HepG2 (cell line): ENCODE measurements at regions of chr18 and their contacts with region 1.

Region 1: DNA sequence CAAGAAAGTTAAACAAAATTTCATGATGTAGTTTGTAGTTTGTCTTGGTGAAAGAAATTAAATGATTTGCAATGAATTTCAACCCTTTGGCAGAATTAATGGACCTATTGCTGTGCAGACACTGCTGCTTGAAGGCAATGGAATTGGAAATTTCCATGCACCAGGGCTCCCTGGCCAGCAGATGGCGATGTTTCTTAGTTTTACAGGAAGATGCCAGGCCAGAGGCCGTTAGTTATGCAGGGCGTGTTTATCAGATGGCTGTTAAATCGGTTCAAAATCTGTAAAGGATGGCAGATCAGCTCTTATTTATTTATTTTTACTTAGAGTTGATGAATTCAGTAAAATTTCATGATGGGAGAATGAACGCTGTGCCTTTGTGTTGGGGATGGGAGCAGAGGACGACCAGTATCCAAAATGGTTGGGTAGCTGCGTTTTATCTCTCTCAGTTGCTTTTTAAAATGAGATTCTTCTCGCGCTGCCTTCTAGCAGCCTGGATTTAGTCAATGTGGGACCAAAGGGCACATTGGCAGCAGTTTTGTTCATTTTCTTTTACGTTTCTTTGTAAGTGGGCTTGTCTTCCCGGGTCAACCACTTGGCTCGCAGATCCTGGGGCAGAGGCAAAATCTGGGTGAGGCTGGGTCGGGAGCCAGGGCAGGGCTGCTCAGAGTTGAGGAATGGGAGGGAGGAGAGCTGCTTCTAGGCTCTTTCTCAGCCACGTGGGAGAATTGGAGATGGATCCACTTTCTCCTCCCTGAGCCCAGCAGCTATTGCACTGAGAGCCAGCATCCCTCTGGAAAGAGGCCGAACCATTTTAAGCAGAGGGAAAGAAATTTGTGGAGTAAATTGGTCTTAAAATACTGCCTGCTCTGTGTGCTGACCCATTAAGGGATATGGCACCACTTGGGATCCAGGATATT is 344.0 kb downstream of the PIK3C3 start:
- DNase-seq: peak; percentile 68
- ATAC-seq: peak; percentile 94
- H3K4me3 ChIP-seq: no peak overlapping the region
- H3K27ac ChIP-seq: no peak overlapping the region
- H3K4me1 ChIP-seq: peaks cover 15% of the 10 kb centered on the region
- H3K27me3 ChIP-seq: no peaks in the 10 kb centered on the region
- CTCF ChIP-seq: peak; percentile 88
- EP300 ChIP-seq: peak in 1 of 2 experiments; percentile 60; a peak in 1 of 4 replicates
- POLR2A ChIP-seq: no peak
- RAD21 ChIP-seq: peak; percentile 80

Region 2: GRCh38 chr18:42446195-42446594 is 147.2 kb after region 1 on chr18:
- CTCF ChIA-PET with region 1: no interaction called
- POLR2A ChIA-PET with region 1: no interaction called
- in situ Hi-C with region 1: no loop called
- intact Hi-C with region 1: loop called (anchors 2 kb)
- DNase-seq: peak; percentile 94
- ATAC-seq: peak; percentile 95
- H3K4me3 ChIP-seq: no peak overlapping the region
- H3K27ac ChIP-seq: peak overlapping the region; percentile 55
- H3K4me1 ChIP-seq: peaks cover 40% of the 10 kb centered on the region
- H3K27me3 ChIP-seq: no peaks in the 10 kb centered on the region
- CTCF ChIP-seq: no peak
- EP300 ChIP-seq: peak; percentile 62 to 78; a peak in 3 of 4 replicates
- POLR2A ChIP-seq: no peak
- RAD21 ChIP-seq: no peak

Region 3: GRCh38 chr18:42730272-42730671 is 431.3 kb after region 1 on chr18:
- CTCF ChIA-PET with region 1: no interaction called
- POLR2A ChIA-PET with region 1: no interaction called
- in situ Hi-C with region 1: no loop called
- intact Hi-C with region 1: loop called (anchors 5 kb)
- DNase-seq: no peak
- ATAC-seq: no peak
- H3K4me3 ChIP-seq: no peak overlapping the region
- H3K27ac ChIP-seq: no peak overlapping the region
- H3K4me1 ChIP-seq: no peaks in the 10 kb centered on the region
- H3K27me3 ChIP-seq: no peaks in the 10 kb centered on the region
- CTCF ChIP-seq: no peak
- EP300 ChIP-seq: no peak
- POLR2A ChIP-seq: no peak
- RAD21 ChIP-seq: no peak

Region 4: GRCh38 chr18:43271593-43272432 is 972.8 kb after region 1 on chr18:
- CTCF ChIA-PET with region 1: no interaction called
- POLR2A ChIA-PET with region 1: interaction called, 4 read pairs
- in situ Hi-C with region 1: loop called (anchors 25 kb)
- intact Hi-C with region 1: loop called (anchors 5 kb)
- DNase-seq: peak; percentile 35
- ATAC-seq: no peak
- H3K4me3 ChIP-seq: no peak overlapping the region
- H3K27ac ChIP-seq: no peak overlapping the region
- H3K4me1 ChIP-seq: no peaks in the 10 kb centered on the region
- H3K27me3 ChIP-seq: no peaks in the 10 kb centered on the region
- CTCF ChIP-seq: peak; percentile 60
- EP300 ChIP-seq: no peak
- POLR2A ChIP-seq: no peak
- RAD21 ChIP-seq: no peak; the same call in 1 of the 2 replicates

Region 5: DNA sequence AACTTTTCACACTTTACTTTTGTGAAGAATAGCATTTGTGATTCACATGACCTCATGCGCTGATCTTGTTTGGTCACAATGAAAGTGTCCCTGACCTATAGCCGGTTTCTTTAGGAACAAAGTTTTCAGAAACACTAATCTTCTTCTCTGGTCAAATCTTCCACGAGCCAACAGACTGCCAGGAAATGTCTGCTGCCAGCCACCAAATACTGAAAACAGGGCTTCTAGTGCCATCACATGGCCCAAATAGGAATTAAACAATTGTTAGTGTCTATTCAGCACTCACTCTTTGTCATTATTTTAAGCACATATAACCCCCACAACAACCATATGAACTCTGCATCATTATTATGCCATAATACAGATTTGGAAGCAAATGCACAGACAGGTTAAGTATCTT is 1264.8 kb after region 1 on chr18:
- CTCF ChIA-PET with region 1: no interaction called
- POLR2A ChIA-PET with region 1: no interaction called
- in situ Hi-C with region 1: no loop called
- intact Hi-C with region 1: loop called (anchors 10 kb)
- DNase-seq: peak; percentile 12
- ATAC-seq: peak; percentile 84
- H3K4me3 ChIP-seq: no peak overlapping the region
- H3K27ac ChIP-seq: no peak overlapping the region
- H3K4me1 ChIP-seq: no peaks in the 10 kb centered on the region
- H3K27me3 ChIP-seq: no peaks in the 10 kb centered on the region
- CTCF ChIP-seq: peak; percentile 67
- EP300 ChIP-seq: no peak
- POLR2A ChIP-seq: no peak
- RAD21 ChIP-seq: peak; percentile 20; the same call in 1 of the 2 replicates

Region 6: DNA sequence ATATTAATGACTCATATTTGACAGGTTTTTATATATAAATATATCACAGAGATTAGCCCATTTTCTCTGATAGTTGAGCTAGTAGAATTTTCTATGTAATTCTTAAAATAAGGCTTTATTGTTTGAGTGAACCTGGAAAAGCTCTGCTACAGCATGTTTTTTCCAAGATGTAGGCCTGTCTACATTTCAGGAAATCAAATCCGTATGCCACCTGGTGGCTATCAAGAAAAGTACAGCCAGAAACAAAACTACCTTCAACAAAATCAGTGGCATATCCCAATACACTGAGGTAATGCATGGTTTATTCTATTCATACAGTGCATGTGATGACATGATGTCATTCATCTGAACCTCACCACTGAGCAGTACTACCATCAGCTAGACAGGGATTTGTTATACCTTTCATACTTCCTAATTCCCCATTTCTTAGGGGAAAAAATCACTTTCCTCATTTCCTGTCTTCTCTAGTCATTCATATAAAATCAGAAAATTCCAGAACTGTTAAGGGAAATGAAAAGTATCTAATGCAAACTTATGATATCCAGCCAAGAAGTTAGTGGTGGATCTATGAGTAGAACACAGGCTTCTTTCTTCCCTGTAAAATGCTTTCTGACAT is 1288.6 kb after region 1 on chr18:
- CTCF ChIA-PET with region 1: no interaction called
- POLR2A ChIA-PET with region 1: no interaction called
- in situ Hi-C with region 1: loop called (anchors 25 kb)
- intact Hi-C with region 1: no loop called
- DNase-seq: peak; percentile 25
- ATAC-seq: peak; percentile 67
- H3K4me3 ChIP-seq: no peak overlapping the region
- H3K27ac ChIP-seq: no peak overlapping the region
- H3K4me1 ChIP-seq: no peaks in the 10 kb centered on the region
- H3K27me3 ChIP-seq: no peaks in the 10 kb centered on the region
- CTCF ChIP-seq: peak; percentile 59
- EP300 ChIP-seq: no peak
- POLR2A ChIP-seq: no peak
- RAD21 ChIP-seq: no peak